GM13976 (cell line): ENCODE measurements at regions of chr10 and their contacts with region 1.

Region 1: GRCh38 chr10:5623081-5623748 is 43.2 kb downstream of the ASB13 start:
- DNase-seq: peak; percentile 90
- CTCF ChIP-seq: peak; percentile 95

Region 2: DNA sequence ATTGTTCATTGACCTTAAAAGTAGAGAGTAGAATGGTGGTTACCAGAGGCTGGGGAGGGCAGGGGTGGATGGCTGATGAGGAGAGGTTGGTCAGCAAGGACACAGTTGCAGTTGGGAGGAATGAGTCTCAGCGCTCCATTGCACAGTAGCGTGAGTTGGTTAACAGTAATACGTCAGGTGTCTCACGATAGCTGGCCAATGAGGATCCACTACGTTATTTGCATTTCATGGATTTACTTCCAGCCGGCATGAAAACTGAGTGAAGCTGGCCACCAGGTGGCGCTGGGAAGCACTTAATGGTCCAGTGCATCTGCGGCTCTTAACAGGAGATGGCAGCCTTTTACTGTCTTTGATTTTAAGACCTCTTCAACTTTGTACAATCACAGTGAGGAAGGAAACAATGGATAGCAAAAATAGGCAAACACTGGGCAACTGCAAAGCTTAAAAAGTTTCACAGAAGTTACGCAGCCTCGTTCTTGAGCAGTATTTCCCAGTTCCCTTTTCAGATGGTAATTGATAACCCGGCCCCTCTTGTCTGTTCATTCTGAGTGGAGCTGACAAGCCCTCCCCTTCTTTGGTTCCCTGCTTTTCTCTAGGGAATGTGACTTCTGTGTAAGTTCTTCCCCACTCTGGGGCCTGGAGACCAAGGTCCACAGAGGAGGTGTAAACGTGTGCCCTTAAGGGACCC is 773.5 kb before region 1 on chr10:
- in situ Hi-C with region 1: loop called (anchors 25 kb)
- DNase-seq: peak; percentile 67
- CTCF ChIP-seq: peak; percentile 92

Region 3: GRCh38 chr10:5442065-5442989 is 180.9 kb before region 1 on chr10:
- in situ Hi-C with region 1: loop called (anchors 5 kb)
- DNase-seq: peak; percentile 34
- CTCF ChIP-seq: peak; percentile 44

Region 4: DNA sequence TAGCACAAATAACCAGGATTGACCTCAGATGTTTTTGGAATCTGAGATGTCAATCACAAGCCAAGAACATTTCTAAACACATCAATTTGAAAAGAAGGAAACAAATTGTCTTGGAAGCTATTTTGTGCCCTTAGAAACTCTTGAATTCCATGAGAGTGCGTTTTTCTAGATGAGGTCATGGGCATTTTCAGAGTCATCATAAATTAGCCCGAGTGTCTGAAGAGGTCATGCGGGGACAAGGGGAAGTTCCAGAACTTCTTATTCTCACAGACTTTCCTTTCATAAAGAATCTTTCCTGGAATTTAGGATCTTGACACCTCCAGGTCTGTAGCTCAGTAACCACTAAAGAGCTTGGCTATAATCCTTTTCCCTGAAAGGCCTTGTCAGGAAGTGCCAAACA is 410.7 kb after region 1 on chr10:
- in situ Hi-C with region 1: no loop called
- DNase-seq: no peak
- CTCF ChIP-seq: no peak